ENCODE measurements at regions of chr17 and their contacts with region 1.

Region 1: DNA sequence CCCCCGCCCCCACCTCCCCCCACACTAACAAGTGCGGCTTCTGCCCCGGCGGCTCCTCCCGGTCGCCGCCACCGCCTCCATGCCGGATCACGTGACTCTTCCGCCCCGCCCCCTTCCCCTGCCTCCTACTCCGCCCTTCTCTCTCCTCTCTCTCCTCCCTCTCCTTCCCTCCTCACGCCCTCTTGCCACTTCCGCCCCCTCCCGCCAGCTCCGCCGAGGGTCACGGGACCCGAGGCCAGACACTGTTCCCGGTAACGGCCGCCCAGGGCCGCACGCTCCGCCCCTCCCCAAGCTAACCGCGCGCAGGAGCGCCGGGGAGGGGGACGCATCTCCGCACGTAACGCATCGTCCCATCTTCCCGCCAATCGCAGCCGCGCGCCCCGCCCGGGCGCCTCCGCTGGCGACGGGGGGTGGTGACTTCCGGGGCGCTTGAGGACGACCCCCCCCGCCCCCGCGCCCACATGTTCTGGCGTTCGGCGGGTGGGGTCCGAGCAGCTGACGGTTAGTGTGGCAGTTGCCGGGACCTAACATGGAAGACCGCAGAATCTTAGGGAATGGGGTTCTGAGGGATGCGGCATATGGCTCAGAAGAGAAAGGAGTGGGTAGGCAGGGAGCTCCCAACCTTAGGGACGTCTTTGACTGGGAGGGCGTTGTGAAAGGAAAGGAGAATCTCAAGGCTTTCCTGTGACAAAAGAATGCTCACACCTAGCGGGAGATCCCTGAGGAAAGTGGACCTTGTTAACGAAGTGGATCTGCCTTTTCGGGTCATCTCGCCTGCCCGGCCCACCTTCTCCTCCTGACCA is at the start of gene USP32:
- DNase-seq: peak; percentile 93 to 99 (median 96)

Region 2: DNA sequence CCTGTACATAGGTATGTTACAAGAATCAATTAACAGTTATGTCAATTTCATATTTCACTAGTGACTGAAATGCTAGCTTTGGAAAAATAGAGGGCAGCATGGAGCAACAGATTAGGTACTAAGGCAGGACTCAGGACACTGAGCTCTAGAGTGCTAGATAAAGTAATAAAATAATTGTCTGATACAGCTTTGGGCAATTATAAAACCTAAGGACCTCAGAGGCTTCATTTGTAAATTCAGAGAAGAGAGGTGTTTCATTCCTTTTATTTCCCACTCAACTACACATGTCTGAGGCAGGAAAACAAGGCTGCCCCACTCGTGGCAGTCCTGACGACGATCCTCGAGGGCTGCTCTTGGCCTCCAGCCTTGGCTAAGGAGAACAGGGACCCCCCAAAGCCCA is 161.0 kb before region 1 on chr17:
- intact Hi-C with region 1: loop called (anchors 5 kb)
- DNase-seq: peak in 2 of 10 donors; percentile 11 to 71

Region 3: DNA sequence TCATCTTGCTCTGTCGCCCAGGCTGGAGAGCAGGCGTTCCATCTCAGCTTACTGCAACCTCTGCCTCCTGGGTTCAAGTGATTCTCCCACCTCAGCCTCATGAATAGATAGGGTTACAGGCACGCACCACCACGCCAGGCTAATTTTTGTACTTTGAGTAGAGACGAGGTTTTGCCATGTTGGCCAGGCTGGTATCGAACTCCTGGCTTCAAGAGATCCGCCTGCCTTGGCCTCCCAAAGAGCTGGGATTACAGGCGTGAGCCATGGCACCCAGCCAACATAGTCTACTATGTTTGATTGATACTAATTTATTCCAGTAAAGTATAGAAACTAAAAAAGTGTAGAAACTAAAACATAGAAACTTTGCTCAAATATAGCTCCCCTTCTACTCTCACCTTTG is 147.6 kb before region 1 on chr17:
- intact Hi-C with region 1: no loop called
- DNase-seq: peak in 1 of 10 donors; percentile 70

Region 4: GRCh38 chr17:60327122-60327900 is 64.9 kb before region 1 on chr17:
- intact Hi-C with region 1: loop called (anchors 5 kb)
- DNase-seq: peak; percentile 39 to 97 (median 71)

Region 5: GRCh38 chr17:60586288-60586974 is 194.2 kb after region 1 on chr17:
- intact Hi-C with region 1: no loop called
- DNase-seq: no peak